Psoas muscle (tissue), 8 donors: ENCODE measurements at regions of chr2 and their contacts with region 1.

Region 1: GRCh38 chr2:37026050-37026449 is 58.1 kb downstream of the HEATR5B start:
- DNase-seq: no peak
- ATAC-seq: peak in 1 of 4 donors; percentile 31
- H3K4me3 ChIP-seq: no peak overlapping the region
- H3K27ac ChIP-seq: no peak overlapping the region
- H3K4me1 ChIP-seq: peaks cover 7% of the 10 kb centered on the region
- H3K27me3 ChIP-seq: no peaks in the 10 kb centered on the region
- CTCF ChIP-seq: no peak

Region 2: GRCh38 chr2:36785179-36785795 is 240.8 kb before region 1 on chr2:
- intact Hi-C with region 1: loop called in 1 of 2 experiments (anchors 10 kb)
- DNase-seq: peak; percentile 38 to 58
- ATAC-seq: peak in 3 of 4 donors; percentile 54 to 77 (median 67)
- H3K4me3 ChIP-seq: no peak overlapping the region
- H3K27ac ChIP-seq: no peak overlapping the region
- H3K4me1 ChIP-seq: no peaks in the 10 kb centered on the region
- H3K27me3 ChIP-seq: no peaks in the 10 kb centered on the region
- CTCF ChIP-seq: peak; percentile 95

Region 3: DNA sequence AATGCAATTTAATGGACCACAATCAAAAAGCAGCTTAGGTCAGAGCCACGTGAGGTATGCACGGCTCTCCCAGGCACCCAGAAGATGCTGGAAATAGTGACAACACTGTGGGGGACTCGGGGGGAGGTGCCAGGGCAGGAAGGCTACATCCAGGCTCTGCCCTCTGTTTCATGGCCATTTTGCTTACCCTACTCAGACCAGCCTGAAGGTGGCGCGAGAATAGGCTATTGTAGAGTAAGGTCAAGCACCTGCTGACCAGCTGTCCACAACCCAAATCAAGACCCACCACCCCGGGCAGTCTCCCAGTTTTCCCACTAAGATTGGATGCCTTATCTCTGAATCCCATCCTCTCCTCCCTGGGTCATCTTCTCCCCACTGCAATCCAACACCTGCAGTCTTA is 213.9 kb before region 1 on chr2:
- intact Hi-C with region 1: no loop called
- DNase-seq: no peak
- ATAC-seq: no peak
- H3K4me3 ChIP-seq: no peak overlapping the region
- H3K27ac ChIP-seq: no peak overlapping the region
- H3K4me1 ChIP-seq: no peaks in the 10 kb centered on the region
- H3K27me3 ChIP-seq: no peaks in the 10 kb centered on the region
- CTCF ChIP-seq: no peak